ENCODE measurements at regions of chr6 and their contacts with region 1.

Region 1: GRCh38 chr6:16761471-16762267 is 409 bp upstream of the ATXN1 start:
- DNase-seq: peak; percentile 87
- CTCF ChIP-seq: peak; percentile 59

Region 2: DNA sequence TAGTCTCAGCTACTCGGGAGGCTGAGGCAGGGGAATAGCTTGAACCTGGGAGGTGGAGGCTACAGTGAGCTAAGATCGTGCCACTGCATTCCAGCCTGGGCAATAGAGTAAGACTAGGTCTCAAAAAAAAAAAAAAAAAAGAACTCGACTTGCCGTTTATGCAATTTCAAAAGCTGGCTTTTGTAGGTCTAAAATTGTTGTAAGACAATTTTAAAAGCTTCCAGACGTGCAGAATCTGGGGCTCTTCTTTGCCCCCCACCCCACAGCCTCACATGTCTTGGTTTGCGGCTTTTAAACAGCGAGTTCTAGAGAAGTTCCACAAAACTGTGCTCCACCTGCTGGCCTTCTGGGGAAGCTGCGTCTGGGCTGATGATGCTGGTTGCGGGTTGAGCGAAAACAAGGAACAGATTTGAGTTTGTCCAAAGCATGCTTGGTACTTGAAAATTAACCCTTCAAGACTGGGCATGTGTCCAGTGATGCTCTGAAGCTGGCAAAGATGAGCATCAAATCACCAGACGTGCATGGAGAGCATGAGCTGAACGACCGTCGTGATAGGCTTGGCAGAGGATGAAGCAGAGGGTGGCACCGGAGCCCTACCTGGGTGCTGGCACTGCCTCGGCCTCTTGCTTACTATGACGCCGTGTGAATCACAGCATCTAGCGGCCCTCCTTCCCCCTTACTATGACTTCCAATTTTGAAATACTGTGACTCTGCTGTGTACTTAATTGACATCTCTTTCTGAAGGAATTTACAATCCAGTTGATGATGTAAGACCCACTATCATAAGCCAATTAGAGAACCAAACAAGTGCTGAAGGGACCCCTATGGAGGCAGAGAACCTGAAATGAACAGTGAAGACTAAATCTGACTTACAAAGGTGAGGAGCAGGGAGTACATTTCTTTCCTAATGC is 351.9 kb before region 1 on chr6:
- in situ Hi-C with region 1: loop called (anchors 10 kb)
- DNase-seq: peak; percentile 28
- CTCF ChIP-seq: peak; percentile 74

Region 3: GRCh38 chr6:16514249-16514648 is 247.4 kb before region 1 on chr6:
- in situ Hi-C with region 1: loop called (anchors 10 kb)
- DNase-seq: peak; percentile 40
- CTCF ChIP-seq: peak; percentile 55

Region 4: GRCh38 chr6:17790489-17790888 is 1028.8 kb after region 1 on chr6:
- in situ Hi-C with region 1: no loop called
- DNase-seq: no peak
- CTCF ChIP-seq: no peak

Measured in GM13977 (cell line).